Activated B cell treated with CpG ODN at 0.5 μM for 24 hours (primary cell): ENCODE measurements at regions of chr4 and their contacts with region 1.

Region 1: GRCh38 chr4:67087897-67088296 is 457.4 kb downstream of the CENPC start:
- DNase-seq: no peak
- ATAC-seq: peak; percentile 31
- H3K4me3 Mint-ChIP-seq: no peak overlapping the region
- H3K27ac Mint-ChIP-seq: no peak overlapping the region
- H3K4me1 Mint-ChIP-seq: no peaks in the 10 kb centered on the region
- H3K27me3 Mint-ChIP-seq: no peaks in the 10 kb centered on the region
- CTCF ChIP-seq: no peak

Region 2: GRCh38 chr4:67327262-67328017 is 239.5 kb after region 1 on chr4:
- CTCF ChIA-PET with region 1: interaction called, 11 read pairs
- POLR2A ChIA-PET with region 1: no interaction called
- intact Hi-C with region 1: loop called (anchors 1 kb)
- DNase-seq: no peak
- ATAC-seq: peak; percentile 58
- H3K4me3 Mint-ChIP-seq: no peak overlapping the region
- H3K27ac Mint-ChIP-seq: no peak overlapping the region
- H3K4me1 Mint-ChIP-seq: no peaks in the 10 kb centered on the region
- H3K27me3 Mint-ChIP-seq: peaks cover 7% of the 10 kb centered on the region
- CTCF ChIP-seq: no peak